ENCODE measurements at regions of chr3 and their contacts with region 1.

Region 1: GRCh38 chr3:16842272-16843270 is 42.2 kb upstream of the PLCL2 start:
- H3K4me3 Mint-ChIP-seq: peak overlapping the region; percentile 51
- H3K27ac Mint-ChIP-seq: peak overlapping the region; percentile 98
- H3K4me1 Mint-ChIP-seq: peaks cover 55% of the 10 kb centered on the region
- H3K27me3 Mint-ChIP-seq: no peaks in the 10 kb centered on the region

Region 2: GRCh38 chr3:16884084-16884747 is 41.6 kb after region 1 on chr3:
- intact Hi-C with region 1: loop called (anchors 5 kb)
- H3K4me3 Mint-ChIP-seq: peak overlapping the region; percentile 93
- H3K27ac Mint-ChIP-seq: peak overlapping the region; percentile 84
- H3K4me1 Mint-ChIP-seq: peaks cover 57% of the 10 kb centered on the region
- H3K27me3 Mint-ChIP-seq: no peaks in the 10 kb centered on the region

Region 3: GRCh38 chr3:17032407-17033034 is 189.9 kb after region 1 on chr3:
- intact Hi-C with region 1: loop called (anchors 10 kb)
- H3K4me3 Mint-ChIP-seq: no peak overlapping the region
- H3K27ac Mint-ChIP-seq: no peak overlapping the region
- H3K4me1 Mint-ChIP-seq: peaks cover 18% of the 10 kb centered on the region
- H3K27me3 Mint-ChIP-seq: no peaks in the 10 kb centered on the region